MCF 10A (cell line): ENCODE measurements at regions of chr13 and their contacts with region 1.

Region 1: GRCh38 chr13:91017031-91017668 is 330.3 kb upstream of the MIR17HG start:
- DNase-seq: peak; percentile 80
- H3K4me3 Mint-ChIP-seq: no peak overlapping the region
- H3K27ac Mint-ChIP-seq: no peak overlapping the region
- H3K4me1 Mint-ChIP-seq: peaks cover 9% of the 10 kb centered on the region
- H3K27me3 Mint-ChIP-seq: no peaks in the 10 kb centered on the region
- CTCF ChIP-seq: peak; percentile 73

Region 2: GRCh38 chr13:90968166-90968904 is 48.8 kb before region 1 on chr13:
- CTCF ChIA-PET with region 1: interaction called, 4 read pairs
- POLR2A ChIA-PET with region 1: no interaction called
- intact Hi-C with region 1: loop called (anchors 5 kb)
- DNase-seq: peak; percentile 46
- H3K4me3 Mint-ChIP-seq: no peak overlapping the region
- H3K27ac Mint-ChIP-seq: no peak overlapping the region
- H3K4me1 Mint-ChIP-seq: no peaks in the 10 kb centered on the region
- H3K27me3 Mint-ChIP-seq: no peaks in the 10 kb centered on the region
- CTCF ChIP-seq: peak; percentile 40

Region 3: GRCh38 chr13:91045351-91046034 is 28.3 kb after region 1 on chr13:
- CTCF ChIA-PET with region 1: no interaction called
- POLR2A ChIA-PET with region 1: no interaction called
- intact Hi-C with region 1: no loop called
- DNase-seq: peak; percentile 36
- H3K4me3 Mint-ChIP-seq: no peak overlapping the region
- H3K27ac Mint-ChIP-seq: no peak overlapping the region
- H3K4me1 Mint-ChIP-seq: no peaks in the 10 kb centered on the region
- H3K27me3 Mint-ChIP-seq: no peaks in the 10 kb centered on the region
- CTCF ChIP-seq: peak; percentile 40